Mammary epithelial cell (primary cell): ENCODE measurements at regions of chr1 and their contacts with region 1.

Region 1: DNA sequence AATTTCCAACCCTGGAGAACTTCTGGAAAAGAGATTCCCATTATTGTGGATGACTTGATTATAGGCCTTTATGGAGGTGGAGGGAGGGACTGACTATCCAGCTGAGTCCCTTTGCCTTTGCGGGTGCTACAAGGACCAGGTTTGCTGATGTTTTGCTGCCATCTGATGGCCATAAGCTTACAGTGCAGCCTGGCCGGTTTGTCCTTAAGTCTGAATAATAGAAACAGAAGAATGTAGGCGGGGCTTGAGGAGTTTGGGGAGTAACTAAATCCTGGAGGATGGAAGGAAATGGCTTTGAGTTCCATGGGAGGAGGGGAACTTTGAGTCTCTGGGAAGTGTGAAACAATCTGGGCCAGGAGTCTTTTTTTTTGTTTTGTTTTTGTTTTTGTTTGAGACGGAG is 55.7 kb upstream of the CD1D start:
- DNase-seq: peak; percentile 89
- H3K4me3 ChIP-seq: no peak overlapping the region
- H3K27ac ChIP-seq: no peak overlapping the region
- H3K4me1 ChIP-seq: peaks cover 18% of the 10 kb centered on the region
- H3K27me3 ChIP-seq: no peaks in the 10 kb centered on the region
- CTCF ChIP-seq: peak; percentile 92 to 98

Region 2: GRCh38 chr1:156797212-156797871 is 1327.7 kb before region 1 on chr1:
- CTCF ChIA-PET with region 1: no interaction called
- dilution Hi-C with region 1: no loop called
- in situ Hi-C with region 1: no loop called
- intact Hi-C with region 1: no loop called
- DNase-seq: peak; percentile 47
- H3K4me3 ChIP-seq: no peak overlapping the region
- H3K27ac ChIP-seq: no peak overlapping the region
- H3K4me1 ChIP-seq: no peaks in the 10 kb centered on the region
- H3K27me3 ChIP-seq: no peaks in the 10 kb centered on the region
- CTCF ChIP-seq: peak; percentile 83 to 94

Region 3: DNA sequence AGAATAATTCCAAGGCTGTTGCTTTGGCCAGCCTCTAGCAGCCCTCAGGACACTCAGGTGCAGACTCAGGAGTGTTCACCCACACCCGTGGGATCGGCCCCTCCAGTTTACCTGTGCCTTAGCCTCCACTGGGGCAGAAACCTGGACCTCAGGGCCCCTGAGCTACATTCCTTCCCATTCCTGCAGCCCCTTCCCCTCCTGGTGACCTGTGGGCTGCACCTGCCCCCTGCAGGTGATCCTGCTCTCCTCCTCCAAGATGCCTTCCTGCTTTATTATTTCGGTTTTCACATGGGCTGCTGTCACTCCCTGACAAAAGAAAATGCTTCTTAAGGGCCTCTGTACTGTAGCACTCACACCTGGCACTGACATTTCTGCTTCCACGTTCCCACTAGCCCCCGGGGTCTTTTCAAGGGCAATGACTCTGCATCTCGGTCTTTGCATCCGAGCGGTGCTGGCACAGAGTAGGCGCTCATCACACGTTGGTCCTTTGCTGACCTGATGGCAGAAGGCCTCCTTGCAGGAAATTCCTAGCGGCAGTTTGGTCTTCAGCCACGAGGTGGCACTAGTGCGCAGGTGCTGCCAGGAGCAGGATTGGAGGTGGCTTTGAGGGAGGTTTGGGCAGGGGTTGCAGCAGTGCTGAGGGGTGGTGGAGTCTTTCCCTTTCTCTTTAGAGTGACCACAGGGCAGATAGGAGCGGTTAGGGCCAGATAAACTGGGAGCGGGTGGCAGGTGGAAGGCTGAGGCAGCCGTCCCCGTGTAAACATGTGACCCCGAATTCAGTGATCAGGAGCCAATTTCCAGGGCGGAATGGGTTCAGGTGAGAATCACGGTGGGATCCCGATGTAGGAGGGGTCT is 961.5 kb before region 1 on chr1:
- CTCF ChIA-PET with region 1: no interaction called
- dilution Hi-C with region 1: no loop called
- in situ Hi-C with region 1: no loop called
- intact Hi-C with region 1: loop called (anchors 10 kb)
- DNase-seq: peak; percentile 43
- H3K4me3 ChIP-seq: peak overlapping the region in 1 of 3 experiments; percentile 29
- H3K27ac ChIP-seq: no peak overlapping the region
- H3K4me1 ChIP-seq: no peaks in the 10 kb centered on the region
- H3K27me3 ChIP-seq: no peaks in the 10 kb centered on the region
- CTCF ChIP-seq: peak; percentile 92 to 95

Region 4: GRCh38 chr1:157580179-157580827 is 544.7 kb before region 1 on chr1:
- CTCF ChIA-PET with region 1: interaction called, 5 read pairs
- dilution Hi-C with region 1: no loop called
- in situ Hi-C with region 1: no loop called
- intact Hi-C with region 1: loop called (anchors 1 kb)
- DNase-seq: peak; percentile 58
- H3K4me3 ChIP-seq: no peak overlapping the region
- H3K27ac ChIP-seq: no peak overlapping the region
- H3K4me1 ChIP-seq: no peaks in the 10 kb centered on the region
- H3K27me3 ChIP-seq: peaks cover under 1% of the 10 kb centered on the region
- CTCF ChIP-seq: peak; percentile 76

Region 5: GRCh38 chr1:157969697-157970485 is 155.1 kb before region 1 on chr1:
- CTCF ChIA-PET with region 1: interaction called, 14 read pairs
- dilution Hi-C with region 1: loop called (anchors 5 kb)
- in situ Hi-C with region 1: loop called (anchors 5 to 10 kb)
- intact Hi-C with region 1: loop called (anchors 1 kb)
- DNase-seq: peak; percentile 90
- H3K4me3 ChIP-seq: no peak overlapping the region
- H3K27ac ChIP-seq: peak overlapping the region; percentile 62
- H3K4me1 ChIP-seq: peaks cover 29% of the 10 kb centered on the region
- H3K27me3 ChIP-seq: no peaks in the 10 kb centered on the region
- CTCF ChIP-seq: peak; percentile 86 to 90

Region 6: GRCh38 chr1:158087320-158087927 is 37.6 kb before region 1 on chr1:
- CTCF ChIA-PET with region 1: no interaction called
- dilution Hi-C with region 1: no loop called
- in situ Hi-C with region 1: no loop called
- intact Hi-C with region 1: loop called (anchors 1 kb)
- DNase-seq: peak; percentile 35
- H3K4me3 ChIP-seq: no peak overlapping the region
- H3K27ac ChIP-seq: no peak overlapping the region
- H3K4me1 ChIP-seq: no peaks in the 10 kb centered on the region
- H3K27me3 ChIP-seq: no peaks in the 10 kb centered on the region
- CTCF ChIP-seq: peak; percentile 86 to 92

Region 7: GRCh38 chr1:158185770-158186705 is 61.0 kb after region 1 on chr1:
- CTCF ChIA-PET with region 1: no interaction called
- dilution Hi-C with region 1: no loop called
- in situ Hi-C with region 1: no loop called
- intact Hi-C with region 1: no loop called
- DNase-seq: no peak
- H3K4me3 ChIP-seq: no peak overlapping the region
- H3K27ac ChIP-seq: no peak overlapping the region
- H3K4me1 ChIP-seq: peaks cover 6% of the 10 kb centered on the region
- H3K27me3 ChIP-seq: no peaks in the 10 kb centered on the region
- CTCF ChIP-seq: no peak

Region 8: DNA sequence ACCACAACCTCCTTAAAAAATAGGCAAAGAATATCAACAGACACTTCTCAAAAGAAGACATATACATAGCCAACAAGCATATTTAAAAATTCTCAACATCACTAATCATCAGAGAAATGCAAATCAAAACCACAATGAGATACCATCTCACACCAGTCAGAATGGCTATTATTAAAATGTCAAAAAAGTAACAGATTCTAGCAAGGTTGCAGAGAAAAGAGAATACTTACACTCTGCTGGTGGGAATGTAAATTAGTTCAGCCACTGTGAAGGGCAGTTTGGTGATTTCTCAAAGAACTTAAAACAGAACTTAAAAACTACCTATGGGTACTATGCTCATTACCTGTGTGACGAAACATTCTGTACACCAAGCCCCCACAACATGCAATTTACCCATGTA is 185.6 kb after region 1 on chr1:
- CTCF ChIA-PET with region 1: no interaction called
- dilution Hi-C with region 1: no loop called
- in situ Hi-C with region 1: no loop called
- intact Hi-C with region 1: no loop called
- DNase-seq: no peak
- H3K4me3 ChIP-seq: no peak overlapping the region
- H3K27ac ChIP-seq: no peak overlapping the region
- H3K4me1 ChIP-seq: no peaks in the 10 kb centered on the region
- H3K27me3 ChIP-seq: no peaks in the 10 kb centered on the region
- CTCF ChIP-seq: no peak

Region 9: DNA sequence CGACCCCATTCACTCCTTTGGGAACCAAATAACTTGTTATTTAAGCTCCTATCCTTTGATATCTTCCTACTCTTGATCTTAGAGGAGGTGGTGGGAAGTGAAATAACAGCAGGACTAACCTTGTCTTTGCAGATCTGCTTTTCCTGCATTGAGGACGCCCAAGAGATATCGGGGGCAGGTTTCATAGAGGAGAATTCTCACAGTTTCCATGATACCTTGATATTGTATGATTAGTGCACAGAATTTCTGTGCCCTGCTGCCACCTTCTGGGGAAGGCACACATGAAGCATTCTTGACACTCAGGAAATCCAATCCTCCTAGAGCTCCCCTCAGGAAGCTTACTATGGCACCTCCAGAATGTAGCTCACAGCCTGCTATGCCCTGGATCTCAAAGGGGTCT is 204.7 kb after region 1 on chr1:
- CTCF ChIA-PET with region 1: interaction called, 8 read pairs
- dilution Hi-C with region 1: no loop called
- in situ Hi-C with region 1: no loop called
- intact Hi-C with region 1: loop called (anchors 5 kb)
- DNase-seq: peak; percentile 4
- H3K4me3 ChIP-seq: no peak overlapping the region
- H3K27ac ChIP-seq: no peak overlapping the region
- H3K4me1 ChIP-seq: no peaks in the 10 kb centered on the region
- H3K27me3 ChIP-seq: no peaks in the 10 kb centered on the region
- CTCF ChIP-seq: peak; percentile 30 to 62

Region 10: DNA sequence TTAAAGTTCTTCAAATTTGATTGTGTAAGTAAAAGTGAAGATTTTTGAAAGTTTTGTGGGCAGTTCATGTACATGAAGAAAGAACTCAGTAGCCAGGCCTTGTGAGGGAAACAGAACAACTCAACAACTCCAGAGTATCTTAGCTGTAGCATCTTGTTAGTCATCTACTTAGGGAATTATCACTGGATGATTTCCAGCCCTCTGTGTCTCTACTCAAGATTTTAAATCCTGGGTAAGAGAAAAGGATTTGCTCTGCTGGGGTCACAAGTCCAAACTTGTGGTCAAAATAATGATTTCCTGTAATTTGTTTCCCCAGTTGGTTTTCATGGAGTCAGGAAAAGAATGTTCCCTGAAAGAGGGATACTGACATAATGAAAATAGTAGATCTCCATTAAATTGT is 266.1 kb after region 1 on chr1:
- CTCF ChIA-PET with region 1: no interaction called
- dilution Hi-C with region 1: no loop called
- in situ Hi-C with region 1: no loop called
- intact Hi-C with region 1: no loop called
- DNase-seq: no peak
- H3K4me3 ChIP-seq: no peak overlapping the region
- H3K27ac ChIP-seq: no peak overlapping the region
- H3K4me1 ChIP-seq: no peaks in the 10 kb centered on the region
- H3K27me3 ChIP-seq: no peaks in the 10 kb centered on the region
- CTCF ChIP-seq: no peak